ENCODE measurements at regions of chr19 and their contacts with region 1.

Region 1: DNA sequence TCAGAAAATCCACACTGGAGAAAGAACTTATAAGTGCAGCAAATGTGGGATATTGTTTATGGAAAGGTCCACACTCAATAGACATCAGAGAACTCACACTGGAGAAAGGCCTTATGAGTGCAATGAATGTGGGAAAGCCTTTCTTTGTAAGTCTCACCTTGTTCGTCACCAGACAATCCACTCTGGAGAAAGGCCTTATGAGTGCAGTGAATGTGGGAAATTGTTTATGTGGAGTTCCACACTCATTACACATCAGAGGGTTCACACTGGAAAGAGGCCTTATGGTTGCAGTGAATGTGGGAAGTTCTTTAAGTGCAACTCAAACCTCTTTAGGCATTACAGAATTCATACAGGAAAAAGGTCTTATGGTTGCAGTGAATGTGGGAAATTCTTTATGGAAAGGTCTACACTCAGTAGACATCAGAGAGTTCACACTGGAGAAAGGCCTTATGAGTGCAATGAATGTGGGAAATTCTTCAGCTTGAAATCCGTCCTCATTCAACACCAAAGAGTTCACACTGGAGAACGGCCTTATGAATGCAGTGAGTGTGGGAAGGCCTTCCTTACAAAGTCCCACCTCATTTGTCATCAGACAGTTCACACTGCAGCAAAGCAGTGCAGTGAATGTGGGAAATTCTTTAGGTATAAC is 12.0 kb upstream of the ZNF548 start:
- DNase-seq: no peak
- ATAC-seq: no peak
- H3K4me3 ChIP-seq: no peak overlapping the region
- H3K27ac ChIP-seq: no peak overlapping the region
- H3K4me1 ChIP-seq: no peaks in the 10 kb centered on the region
- H3K27me3 ChIP-seq: no peaks in the 10 kb centered on the region
- CTCF ChIP-seq: no peak
- POLR2A ChIP-seq: no peak
- RAD21 ChIP-seq: no peak

Region 2: GRCh38 chr19:57057036-57057686 is 320.5 kb before region 1 on chr19:
- CTCF ChIA-PET with region 1: no interaction called
- POLR2A ChIA-PET with region 1: no interaction called
- dilution Hi-C with region 1: no loop called
- in situ Hi-C with region 1: no loop called
- intact Hi-C with region 1: no loop called
- DNase-seq: peak; percentile 11
- ATAC-seq: peak; percentile 54
- H3K4me3 ChIP-seq: no peak overlapping the region
- H3K27ac ChIP-seq: peak overlapping the region; percentile 72; the same call in 1 of the 2 replicates
- H3K4me1 ChIP-seq: no peaks in the 10 kb centered on the region
- H3K27me3 ChIP-seq: no peaks in the 10 kb centered on the region
- CTCF ChIP-seq: no peak
- POLR2A ChIP-seq: no peak
- RAD21 ChIP-seq: no peak

Region 3: DNA sequence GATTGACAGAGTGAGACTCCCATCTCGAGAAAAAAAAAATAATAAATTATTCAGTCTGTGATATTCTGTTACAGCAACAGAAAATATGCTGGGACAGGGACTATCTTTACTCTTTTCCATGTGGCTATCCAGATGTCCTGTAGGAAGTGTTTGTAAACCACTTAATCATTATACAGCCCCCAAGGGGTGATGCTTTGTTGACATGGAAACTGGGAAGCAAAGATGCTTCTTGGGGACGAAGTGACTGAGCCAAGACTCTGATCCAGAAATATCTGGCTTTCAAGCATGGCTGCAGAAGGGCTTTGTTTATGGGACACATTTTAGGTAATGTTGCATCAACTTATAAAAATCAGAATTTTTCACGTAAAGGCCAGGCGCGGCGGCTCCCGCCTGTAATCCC is 906.6 kb after region 1 on chr19:
- CTCF ChIA-PET with region 1: no interaction called
- POLR2A ChIA-PET with region 1: interaction called, 10 read pairs
- dilution Hi-C with region 1: no loop called
- in situ Hi-C with region 1: no loop called
- intact Hi-C with region 1: no loop called
- DNase-seq: no peak
- ATAC-seq: no peak
- H3K4me3 ChIP-seq: no peak overlapping the region
- H3K27ac ChIP-seq: no peak overlapping the region
- H3K4me1 ChIP-seq: 0 out of 2 replicates have a peak, but pooled peaks cover 2% of the 10 kb centered on the region
- H3K27me3 ChIP-seq: no peaks in the 10 kb centered on the region
- CTCF ChIP-seq: no peak
- POLR2A ChIP-seq: no peak
- RAD21 ChIP-seq: no peak

Measured in IMR-90 (cell line).